ENCODE measurements at regions of chr1 and their contacts with region 1.

Region 1: GRCh38 chr1:18902523-18903290 is at the start of gene ALDH4A1:
- DNase-seq: peak; percentile 96 to 99
- ATAC-seq: peak; percentile 96 to 98 (median 98)
- H3K4me3 ChIP-seq: peak within 1 kb of the TSS; percentile 68 to 96 (median 81)
- H3K27ac ChIP-seq: peak within 1 kb of the TSS; percentile 85 to 96 (median 92)
- H3K4me1 ChIP-seq: peaks cover 12 to 40% (median 35%) of the 10 kb centered on the region in 9 donors
- H3K27me3 ChIP-seq: no peaks in the 10 kb centered on the region
- CTCF ChIP-seq: peak in 3 of 9 donors; percentile 3 to 17 (median 7)
- total RNA-seq, gene ALDH4A1: 18.5 to 60.8 (median 44.7) TPM

Region 2: DNA sequence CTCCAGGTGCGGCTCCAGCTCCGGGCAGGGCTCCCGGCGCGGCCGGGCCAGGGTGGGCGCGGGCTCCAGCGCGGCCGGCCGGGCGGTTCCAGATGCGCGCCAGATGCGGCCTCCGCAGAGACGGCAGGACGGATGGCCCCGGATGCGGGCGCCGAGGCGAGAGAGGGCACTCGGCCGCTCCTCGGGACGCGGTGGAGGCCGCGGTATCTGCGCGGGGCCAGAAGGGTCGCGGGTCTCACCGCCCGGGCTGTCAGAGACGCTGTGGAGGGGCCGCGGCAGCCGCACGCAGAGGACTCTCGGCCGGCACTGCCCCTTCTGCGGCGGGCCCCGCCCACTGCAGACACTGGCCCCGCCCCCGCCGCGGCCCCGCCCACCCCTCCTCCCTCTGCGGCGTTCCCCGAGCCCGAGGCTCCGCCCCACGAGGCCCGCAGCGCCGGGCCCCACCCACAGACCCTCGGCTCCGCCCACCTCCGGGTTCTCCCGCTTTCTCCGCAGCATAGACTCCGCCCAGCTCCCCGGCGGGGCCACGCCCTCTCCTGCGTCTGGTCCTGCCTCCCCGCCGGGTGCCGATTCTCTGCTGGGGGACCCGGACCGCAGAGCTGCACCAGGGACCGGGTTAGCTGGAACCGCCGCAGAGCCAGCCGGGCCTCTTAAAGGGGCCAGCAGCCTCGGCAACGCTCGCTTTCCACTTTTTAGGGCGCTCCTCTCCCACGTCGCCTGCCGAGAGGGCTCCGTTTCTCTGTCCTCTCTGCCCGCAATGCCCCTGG is 53.8 kb after region 1 on chr1 and contains the start of gene IFFO2:
- intact Hi-C with region 1: loop called in 4 of 10 experiments (anchors 2 to 10 kb)
- DNase-seq: peak; percentile 98 to 100
- ATAC-seq: peak; percentile 97 to 99 (median 98)
- H3K4me3 ChIP-seq: peak within 1 kb of the TSS; percentile 64 to 90 (median 84)
- H3K27ac ChIP-seq: peak within 1 kb of the TSS; percentile 42 to 85 (median 76)
- H3K4me1 ChIP-seq: peaks cover 1 to 47% (median 31%) of the 10 kb centered on the region in 9 donors
- H3K27me3 ChIP-seq: peaks cover 0 to 26% (median 0%) of the 10 kb centered on the region in 7 donors
- CTCF ChIP-seq: no peak
- total RNA-seq, gene IFFO2: 3.2 to 8.2 (median 4.7) TPM

Region 3: DNA sequence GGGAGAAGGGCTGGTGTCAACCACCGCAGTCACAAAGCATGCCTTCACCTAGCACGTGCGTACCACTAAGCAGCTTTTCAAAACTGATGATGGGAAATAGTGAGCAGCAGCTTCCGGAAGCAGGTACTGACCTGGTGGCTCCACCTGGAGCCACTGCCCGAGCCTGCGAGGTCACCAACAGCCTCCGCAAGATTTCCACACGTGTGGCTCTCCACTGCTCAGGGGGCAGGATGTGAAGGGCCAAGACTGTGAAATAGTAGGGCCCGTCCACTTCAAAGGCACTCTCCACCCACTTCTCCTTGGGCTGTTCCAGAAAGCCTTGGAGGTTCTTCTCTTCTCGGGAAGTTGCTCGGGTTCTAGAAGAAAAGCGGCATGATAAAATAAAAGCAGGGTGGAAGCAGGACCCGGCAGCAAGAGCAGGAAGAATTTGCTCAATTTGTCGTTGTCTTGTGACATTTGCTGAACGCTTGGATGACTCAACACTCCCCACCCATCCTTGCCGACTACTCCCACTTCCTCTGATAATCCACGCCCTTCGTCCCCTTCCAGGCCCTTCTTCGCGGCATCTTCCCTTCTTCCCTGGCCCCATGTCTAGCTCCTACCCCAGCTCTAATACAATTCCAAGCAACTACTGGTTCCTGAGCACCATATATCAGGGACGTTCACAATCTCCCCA is 178.6 kb after region 1 on chr1:
- intact Hi-C with region 1: loop called in 3 of 10 experiments (anchors 5 kb)
- DNase-seq: peak in 1 of 2 donors; percentile 57
- ATAC-seq: peak in 7 of 8 donors; percentile 42 to 83 (median 62)
- H3K4me3 ChIP-seq: peak overlapping the region in 6 of 10 donors; percentile 8 to 38 (median 30)
- H3K27ac ChIP-seq: peak overlapping the region in 9 of 10 donors; percentile 46 to 85 (median 67)
- H3K4me1 ChIP-seq: peaks cover 4 to 41% (median 10%) of the 10 kb centered on the region in 9 donors
- H3K27me3 ChIP-seq: no peaks in the 10 kb centered on the region
- CTCF ChIP-seq: no peak

Region 4: GRCh38 chr1:19096036-19096833 is 193.5 kb after region 1 on chr1:
- intact Hi-C with region 1: loop called in 7 of 10 experiments (anchors 1 to 5 kb)
- DNase-seq: peak; percentile 44 to 53
- ATAC-seq: peak in 7 of 8 donors; percentile 63 to 88 (median 85)
- H3K4me3 ChIP-seq: no peak overlapping the region
- H3K27ac ChIP-seq: peak overlapping the region in 1 of 10 donors; percentile 0
- H3K4me1 ChIP-seq: peaks cover 0 to 20% (median 4%) of the 10 kb centered on the region in 9 donors
- H3K27me3 ChIP-seq: no peaks in the 10 kb centered on the region
- CTCF ChIP-seq: peak; percentile 35 to 74 (median 62)

Region 5: DNA sequence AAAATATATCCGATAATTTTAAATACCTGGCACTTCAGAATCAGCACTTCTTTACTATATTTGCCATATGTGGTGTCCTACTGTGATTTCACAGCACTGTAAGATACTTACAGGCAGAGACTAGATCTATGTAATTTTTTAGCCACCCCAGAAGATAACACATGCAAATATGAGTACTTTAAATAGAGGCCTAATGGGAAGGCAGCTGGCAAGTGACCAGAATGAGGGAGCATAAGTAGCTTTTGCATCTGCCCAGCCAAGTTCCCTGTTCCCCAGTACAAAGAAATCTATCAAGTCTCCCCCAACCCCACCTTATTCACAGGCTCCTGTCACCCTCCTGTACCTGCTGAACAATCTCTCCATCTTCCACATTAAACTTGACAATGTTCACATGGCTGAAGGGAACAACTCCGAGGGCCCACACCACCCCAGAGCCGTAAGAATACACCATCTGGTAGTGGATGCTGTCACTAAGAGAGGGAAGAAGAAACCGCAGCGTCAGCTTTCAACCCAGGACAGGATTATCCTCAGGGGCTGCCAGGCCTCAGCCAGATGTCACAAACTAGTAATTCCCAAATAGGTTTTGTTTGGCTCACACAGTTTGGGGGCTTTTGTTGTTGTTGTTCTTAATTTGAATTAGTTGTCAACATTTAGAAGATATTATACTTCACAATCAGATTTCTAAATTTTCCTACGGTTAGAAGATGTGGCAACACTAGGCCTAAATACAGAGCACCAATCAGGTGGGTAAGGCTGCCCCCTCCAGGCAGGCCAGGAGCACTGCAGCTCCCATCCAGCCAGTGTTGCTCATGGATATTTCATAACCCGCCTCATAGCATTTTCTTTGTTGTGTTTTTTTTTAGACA is 338.2 kb after region 1 on chr1:
- intact Hi-C with region 1: loop called in 2 of 10 experiments (anchors 10 kb)
- DNase-seq: peak; percentile 33 to 51
- ATAC-seq: peak; percentile 80 to 94 (median 91)
- H3K4me3 ChIP-seq: no peak overlapping the region
- H3K27ac ChIP-seq: peak overlapping the region in 2 of 10 donors; percentile 47 to 48
- H3K4me1 ChIP-seq: peaks cover 0 to 15% (median 0%) of the 10 kb centered on the region in 9 donors
- H3K27me3 ChIP-seq: no peaks in the 10 kb centered on the region
- CTCF ChIP-seq: peak; percentile 85 to 98 (median 96)

Measured in heart right ventricle (tissue), 16 donors.